ENCODE measurements at regions of chr7 and their contacts with region 1.

Region 1: GRCh38 chr7:105013221-105013815 is 687 bp upstream of the KMT2E start:
- DNase-seq: peak; percentile 89 to 97 (median 94)
- ATAC-seq: peak; percentile 59 to 72 (median 70)
- H3K4me3 ChIP-seq: peak overlapping the region; percentile 79 to 88
- H3K4me3 Mint-ChIP-seq: peak overlapping the region; percentile 97 to 100 (median 100)
- H3K27ac ChIP-seq: peak overlapping the region; percentile 98
- H3K27ac Mint-ChIP-seq: peak overlapping the region; percentile 100
- H3K4me1 ChIP-seq: peaks cover 14 to 32% of the 10 kb centered on the region in 2 experiments
- H3K4me1 Mint-ChIP-seq: peaks cover 41 to 55% (median 44%) of the 10 kb centered on the region in 3 donors
- H3K27me3 ChIP-seq: no peaks in the 10 kb centered on the region
- H3K27me3 Mint-ChIP-seq: no peaks in the 10 kb centered on the region

Region 2: GRCh38 chr7:103466814-103467213 is 1546.5 kb before region 1 on chr7:
- CTCF ChIA-PET with region 1: no interaction called
- POLR2A ChIA-PET with region 1: interaction called in 1 of 2 experiments, 12 read pairs
- DNase-seq: no peak
- ATAC-seq: no peak
- H3K4me3 ChIP-seq: no peak overlapping the region
- H3K4me3 Mint-ChIP-seq: no peak overlapping the region
- H3K27ac ChIP-seq: no peak overlapping the region
- H3K27ac Mint-ChIP-seq: no peak overlapping the region
- H3K4me1 ChIP-seq: no peaks in the 10 kb centered on the region
- H3K4me1 Mint-ChIP-seq: no peaks in the 10 kb centered on the region
- H3K27me3 ChIP-seq: peaks cover 0 to 19% of the 10 kb centered on the region in 2 experiments
- H3K27me3 Mint-ChIP-seq: peaks cover 23 to 31% of the 10 kb centered on the region in 2 donors

Region 3: GRCh38 chr7:105003275-105003674 is 10.0 kb before region 1 on chr7:
- CTCF ChIA-PET with region 1: interaction called in 1 of 2 experiments, 16 read pairs
- POLR2A ChIA-PET with region 1: interaction called, 6 to 10 read pairs
- DNase-seq: peak in 2 of 35 experiments; percentile 40 to 54
- ATAC-seq: peak; percentile 54 to 83 (median 74)
- H3K4me3 ChIP-seq: no peak overlapping the region
- H3K4me3 Mint-ChIP-seq: peak overlapping the region; percentile 62 to 69 (median 68)
- H3K27ac ChIP-seq: peak overlapping the region; percentile 13
- H3K27ac Mint-ChIP-seq: peak overlapping the region; percentile 81 to 83
- H3K4me1 ChIP-seq: peaks cover 55 to 59% of the 10 kb centered on the region in 2 experiments
- H3K4me1 Mint-ChIP-seq: peaks cover 90 to 94% (median 93%) of the 10 kb centered on the region in 3 donors
- H3K27me3 ChIP-seq: no peaks in the 10 kb centered on the region
- H3K27me3 Mint-ChIP-seq: no peaks in the 10 kb centered on the region

Region 4: DNA sequence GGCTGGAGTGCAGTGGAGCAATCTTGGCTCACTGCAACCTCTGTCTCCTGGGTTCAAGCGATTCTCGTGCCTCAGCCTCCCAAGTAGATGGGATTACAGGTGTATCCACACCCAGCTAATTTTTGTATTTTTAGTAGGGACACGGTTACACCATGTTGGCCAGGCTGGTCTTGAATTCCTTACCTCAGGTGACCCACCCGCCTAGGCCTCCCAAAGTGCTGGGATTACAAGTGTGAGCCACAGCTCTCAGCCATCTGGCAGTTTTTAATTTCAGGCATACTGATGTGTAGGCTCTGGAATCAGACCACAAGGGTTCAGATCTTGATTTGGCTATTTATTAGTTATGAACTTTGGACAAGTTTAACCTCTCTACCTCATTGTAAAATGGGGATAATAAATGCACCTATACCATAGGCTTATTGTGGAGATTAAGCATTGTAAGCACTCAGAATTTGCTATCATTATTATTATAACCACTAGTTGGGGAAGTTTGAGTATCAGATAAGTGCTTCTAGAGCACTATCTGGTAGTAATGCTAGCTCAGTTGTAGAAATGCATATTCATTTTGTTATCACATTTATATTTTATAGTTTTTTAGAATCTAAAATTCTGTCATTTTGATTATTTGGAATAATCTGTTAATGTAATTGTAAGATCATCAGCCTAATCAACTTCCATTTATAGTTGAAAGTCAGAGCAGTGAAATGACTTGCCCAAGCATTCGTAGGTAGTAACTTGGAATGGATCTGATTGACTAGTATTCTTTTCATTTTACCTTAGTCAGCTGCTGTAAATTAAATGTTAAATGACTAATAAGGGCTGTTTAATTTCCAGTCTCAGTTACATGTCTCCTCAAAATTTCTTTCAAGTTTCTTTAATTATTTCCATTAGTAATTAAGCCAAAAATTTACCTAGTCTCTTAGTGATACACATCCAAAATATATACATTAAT is 23.2 kb after region 1 on chr7:
- CTCF ChIA-PET with region 1: interaction called, 4 to 14 read pairs
- POLR2A ChIA-PET with region 1: interaction called, 9 to 15 read pairs
- DNase-seq: no peak
- ATAC-seq: peak in 1 of 4 experiments; percentile 23
- H3K4me3 ChIP-seq: no peak overlapping the region
- H3K4me3 Mint-ChIP-seq: peak overlapping the region; percentile 7 to 27 (median 24)
- H3K27ac ChIP-seq: peak overlapping the region; percentile 34
- H3K27ac Mint-ChIP-seq: peak overlapping the region; percentile 37 to 68
- H3K4me1 ChIP-seq: peaks cover 4 to 45% of the 10 kb centered on the region in 2 experiments
- H3K4me1 Mint-ChIP-seq: peaks cover 61 to 72% (median 68%) of the 10 kb centered on the region in 3 donors
- H3K27me3 ChIP-seq: no peaks in the 10 kb centered on the region
- H3K27me3 Mint-ChIP-seq: no peaks in the 10 kb centered on the region

Region 5: GRCh38 chr7:105060437-105060836 is 47.1 kb after region 1 on chr7:
- CTCF ChIA-PET with region 1: interaction called, 3 read pairs
- POLR2A ChIA-PET with region 1: interaction called in 1 of 2 experiments, 13 read pairs
- DNase-seq: no peak
- ATAC-seq: peak in 1 of 4 experiments; percentile 21
- H3K4me3 ChIP-seq: no peak overlapping the region
- H3K4me3 Mint-ChIP-seq: no peak overlapping the region
- H3K27ac ChIP-seq: no peak overlapping the region
- H3K27ac Mint-ChIP-seq: peak overlapping the region; percentile 67 to 76
- H3K4me1 ChIP-seq: peaks cover 0 to 7% of the 10 kb centered on the region in 2 experiments
- H3K4me1 Mint-ChIP-seq: peaks cover 67 to 81% (median 78%) of the 10 kb centered on the region in 3 donors
- H3K27me3 ChIP-seq: no peaks in the 10 kb centered on the region
- H3K27me3 Mint-ChIP-seq: no peaks in the 10 kb centered on the region

Region 6: GRCh38 chr7:105131033-105131656 is 117.8 kb after region 1 on chr7:
- CTCF ChIA-PET with region 1: no interaction called
- POLR2A ChIA-PET with region 1: no interaction called
- DNase-seq: no peak
- ATAC-seq: no peak
- H3K4me3 ChIP-seq: no peak overlapping the region
- H3K4me3 Mint-ChIP-seq: no peak overlapping the region
- H3K27ac ChIP-seq: no peak overlapping the region
- H3K27ac Mint-ChIP-seq: no peak overlapping the region
- H3K4me1 ChIP-seq: peaks cover 0 to 4% of the 10 kb centered on the region in 2 experiments
- H3K4me1 Mint-ChIP-seq: peaks cover 6 to 10% (median 6%) of the 10 kb centered on the region in 3 donors
- H3K27me3 ChIP-seq: no peaks in the 10 kb centered on the region
- H3K27me3 Mint-ChIP-seq: no peaks in the 10 kb centered on the region

Region 7: GRCh38 chr7:106285051-106285854 is 1271.9 kb after region 1 on chr7:
- CTCF ChIA-PET with region 1: no interaction called
- POLR2A ChIA-PET with region 1: no interaction called
- DNase-seq: peak; percentile 86 to 100 (median 97)
- ATAC-seq: peak; percentile 88 to 96 (median 92)
- H3K4me3 ChIP-seq: peak overlapping the region; percentile 81 to 97
- H3K4me3 Mint-ChIP-seq: peak overlapping the region; percentile 85 to 97 (median 95)
- H3K27ac ChIP-seq: peak overlapping the region; percentile 91
- H3K27ac Mint-ChIP-seq: peak overlapping the region; percentile 94 to 97
- H3K4me1 ChIP-seq: peaks cover 7 to 12% of the 10 kb centered on the region in 2 experiments
- H3K4me1 Mint-ChIP-seq: peaks cover 30 to 38% (median 35%) of the 10 kb centered on the region in 3 donors
- H3K27me3 ChIP-seq: no peaks in the 10 kb centered on the region
- H3K27me3 Mint-ChIP-seq: peaks cover 0 to 1% of the 10 kb centered on the region in 2 donors